ENCODE measurements at regions of chr3 and their contacts with region 1.

Region 1: DNA sequence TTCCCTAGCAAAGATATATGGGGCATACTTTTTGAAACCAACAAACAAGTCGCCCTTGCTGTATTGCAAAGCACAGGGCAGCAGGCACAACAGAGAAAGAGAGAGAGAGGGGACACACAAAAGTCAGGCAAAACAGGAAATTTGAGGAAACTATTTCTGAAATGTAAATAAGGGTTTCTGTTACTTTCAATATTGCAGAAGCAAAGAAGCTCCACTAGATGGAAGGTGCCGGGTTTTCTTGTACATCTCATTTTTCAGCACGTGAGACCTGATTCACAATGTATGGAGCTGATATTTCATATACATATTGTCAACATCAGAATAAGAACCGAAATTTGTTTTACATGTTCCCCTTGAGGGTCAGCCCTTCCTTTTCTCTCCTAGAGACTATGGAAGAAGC is 127.4 kb downstream of the FOXP1 start:
- DNase-seq: peak in 1 of 2 donors; percentile 65
- ATAC-seq: peak; percentile 43 to 52 (median 50)
- H3K4me3 ChIP-seq: peak overlapping the region; percentile 17
- H3K4me3 Mint-ChIP-seq: peak overlapping the region; percentile 69
- H3K27ac ChIP-seq: peak overlapping the region; percentile 76
- H3K27ac Mint-ChIP-seq: peak overlapping the region; percentile 85 to 92
- H3K4me1 ChIP-seq: peaks cover 42% of the 10 kb centered on the region
- H3K4me1 Mint-ChIP-seq: peaks cover 69% of the 10 kb centered on the region in 2 donors
- H3K27me3 ChIP-seq: no peaks in the 10 kb centered on the region
- H3K27me3 Mint-ChIP-seq: no peaks in the 10 kb centered on the region
- CTCF ChIP-seq: no peak

Region 2: GRCh38 chr3:71389911-71390573 is 66.1 kb before region 1 on chr3:
- intact Hi-C with region 1: loop called (anchors 5 kb)
- DNase-seq: peak in 1 of 2 donors; percentile 64
- ATAC-seq: peak in 2 of 3 donors; percentile 11 to 27
- H3K4me3 ChIP-seq: no peak overlapping the region
- H3K4me3 Mint-ChIP-seq: peak overlapping the region; percentile 64
- H3K27ac ChIP-seq: peak overlapping the region; percentile 93
- H3K27ac Mint-ChIP-seq: peak overlapping the region; percentile 38 to 44
- H3K4me1 ChIP-seq: peaks cover 15% of the 10 kb centered on the region
- H3K4me1 Mint-ChIP-seq: peaks cover 28 to 33% of the 10 kb centered on the region in 2 donors
- H3K27me3 ChIP-seq: no peaks in the 10 kb centered on the region
- H3K27me3 Mint-ChIP-seq: no peaks in the 10 kb centered on the region
- CTCF ChIP-seq: no peak

Region 3: DNA sequence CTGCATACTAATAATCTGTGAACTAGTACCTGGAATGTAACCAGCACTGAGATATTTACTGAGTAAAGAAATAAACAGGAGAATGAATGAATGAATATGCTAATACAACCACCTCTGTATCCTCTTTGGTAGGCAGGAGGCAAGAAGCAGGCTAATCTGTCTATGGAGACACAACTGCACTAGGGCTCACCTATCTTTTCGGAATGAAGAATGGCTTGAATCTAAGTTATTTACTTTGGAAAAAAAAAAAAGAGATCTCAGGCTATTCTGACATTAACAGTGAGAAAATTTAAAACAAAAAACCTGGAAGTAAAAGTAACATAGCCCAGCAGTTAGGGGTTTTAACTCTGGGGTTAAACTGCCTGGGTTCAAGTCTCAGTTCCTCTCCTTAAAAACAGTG is 46.8 kb before region 1 on chr3:
- intact Hi-C with region 1: no loop called
- DNase-seq: no peak
- ATAC-seq: no peak
- H3K4me3 ChIP-seq: no peak overlapping the region
- H3K4me3 Mint-ChIP-seq: no peak overlapping the region
- H3K27ac ChIP-seq: no peak overlapping the region
- H3K27ac Mint-ChIP-seq: peak overlapping the region in 1 of 2 donors; percentile 7
- H3K4me1 ChIP-seq: no peaks in the 10 kb centered on the region
- H3K4me1 Mint-ChIP-seq: peaks cover 2 to 7% of the 10 kb centered on the region in 2 donors
- H3K27me3 ChIP-seq: no peaks in the 10 kb centered on the region
- H3K27me3 Mint-ChIP-seq: no peaks in the 10 kb centered on the region
- CTCF ChIP-seq: no peak

Region 4: DNA sequence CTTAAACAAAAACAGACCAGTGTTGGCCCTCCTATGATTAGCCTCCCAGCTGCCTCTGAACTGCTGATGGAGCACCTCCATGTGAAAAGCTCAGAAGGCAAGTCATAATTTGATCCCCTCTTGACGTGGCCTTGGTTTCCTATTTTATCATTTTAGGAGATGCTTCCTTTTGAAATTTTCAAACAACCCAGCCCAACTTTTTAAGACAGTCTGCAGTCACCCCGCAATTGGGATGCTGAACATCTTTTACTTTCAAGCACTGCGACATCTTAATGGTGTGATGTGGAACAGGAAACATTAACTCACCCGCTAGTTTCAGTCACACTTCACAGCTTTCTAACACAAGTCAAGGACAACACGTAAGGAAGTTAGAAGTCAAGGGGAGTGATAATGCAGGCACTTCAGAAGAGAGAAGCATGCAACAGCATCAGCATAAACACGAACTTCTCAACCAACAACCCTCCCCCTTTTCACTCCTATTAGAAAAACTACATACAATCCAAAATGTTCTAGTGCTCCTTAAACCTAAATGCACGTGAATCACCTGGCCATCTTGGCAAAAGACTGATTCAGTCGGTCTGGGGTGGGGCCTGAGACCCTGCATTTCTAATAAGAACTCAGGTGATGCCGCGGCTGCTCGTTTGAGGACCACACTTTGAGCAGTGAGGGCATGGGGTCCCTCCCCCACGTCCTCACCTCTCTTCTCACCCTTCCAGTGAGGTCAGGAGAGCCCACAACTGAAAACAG is 34.2 kb before region 1 on chr3:
- intact Hi-C with region 1: loop called (anchors 5 kb)
- DNase-seq: peak; percentile 28 to 79
- ATAC-seq: peak; percentile 92 to 94 (median 93)
- H3K4me3 ChIP-seq: no peak overlapping the region
- H3K4me3 Mint-ChIP-seq: peak overlapping the region; percentile 70
- H3K27ac ChIP-seq: peak overlapping the region; percentile 91
- H3K27ac Mint-ChIP-seq: peak overlapping the region; percentile 93 to 95
- H3K4me1 ChIP-seq: peaks cover 26% of the 10 kb centered on the region
- H3K4me1 Mint-ChIP-seq: peaks cover 47 to 56% of the 10 kb centered on the region in 2 donors
- H3K27me3 ChIP-seq: no peaks in the 10 kb centered on the region
- H3K27me3 Mint-ChIP-seq: no peaks in the 10 kb centered on the region
- CTCF ChIP-seq: no peak

Region 5: DNA sequence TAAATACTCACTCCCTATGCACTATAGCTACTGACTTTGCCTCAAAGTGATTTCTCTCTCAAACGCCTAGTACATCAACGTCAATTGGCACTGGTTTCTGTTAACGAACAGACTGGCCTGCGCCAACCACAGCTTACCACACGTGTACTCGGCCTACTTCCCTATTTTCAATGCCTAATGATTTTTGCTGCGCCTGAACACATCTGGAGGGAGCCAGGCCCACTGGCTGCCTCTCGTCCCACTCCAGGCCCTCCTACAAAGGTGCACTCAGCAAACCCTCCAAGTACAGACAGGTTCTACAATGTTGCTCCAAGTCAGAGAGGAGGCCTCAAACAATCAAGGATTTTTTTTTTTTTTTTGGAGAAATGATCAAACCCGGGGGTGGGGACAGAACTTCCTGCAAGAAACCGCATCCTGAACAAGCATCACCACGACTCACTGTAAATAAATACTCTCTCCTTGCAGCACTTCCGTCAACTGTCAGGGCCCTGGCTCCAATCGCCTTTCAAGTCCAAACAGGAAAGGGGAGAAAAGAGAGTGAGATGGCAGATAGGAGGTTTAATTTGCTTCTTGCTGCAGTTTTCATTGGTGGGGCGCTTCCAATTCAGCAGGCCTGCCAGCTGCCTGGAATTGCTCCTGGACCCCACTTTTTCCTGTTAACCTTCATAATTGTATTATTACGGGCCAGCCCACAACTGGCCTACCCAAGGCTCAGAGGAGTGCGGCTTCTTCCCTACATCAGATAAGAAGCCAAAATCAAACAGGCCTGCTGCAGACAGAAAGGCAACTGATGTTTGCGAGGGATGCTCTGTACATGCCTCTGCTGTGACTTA is 11.9 kb before region 1 on chr3:
- intact Hi-C with region 1: loop called (anchors 1 kb)
- DNase-seq: peak; percentile 48 to 94
- ATAC-seq: peak; percentile 78 to 88 (median 84)
- H3K4me3 ChIP-seq: no peak overlapping the region
- H3K4me3 Mint-ChIP-seq: peak overlapping the region; percentile 78
- H3K27ac ChIP-seq: peak overlapping the region; percentile 93
- H3K27ac Mint-ChIP-seq: peak overlapping the region; percentile 93 to 96
- H3K4me1 ChIP-seq: peaks cover 81% of the 10 kb centered on the region
- H3K4me1 Mint-ChIP-seq: peaks cover 71 to 75% of the 10 kb centered on the region in 2 donors
- H3K27me3 ChIP-seq: no peaks in the 10 kb centered on the region
- H3K27me3 Mint-ChIP-seq: no peaks in the 10 kb centered on the region
- CTCF ChIP-seq: no peak

Measured in natural killer cell (primary cell).